ENCODE measurements at regions of chr16 and their contacts with region 1.

Region 1: GRCh38 chr16:22190776-22191531 is 15.1 kb upstream of the EEF2K start:
- DNase-seq: peak; percentile 98
- H3K4me3 ChIP-seq: peak overlapping the region; percentile 47
- H3K27me3 ChIP-seq: no peaks in the 10 kb centered on the region
- CTCF ChIP-seq: no peak

Region 2: GRCh38 chr16:21952040-21952792 is 238.7 kb before region 1 on chr16:
- CTCF ChIA-PET with region 1: interaction called, 21 read pairs
- POLR2A ChIA-PET with region 1: no interaction called
- DNase-seq: no peak
- H3K4me3 ChIP-seq: peak overlapping the region; percentile 87
- H3K27me3 ChIP-seq: no peaks in the 10 kb centered on the region
- CTCF ChIP-seq: no peak

Region 3: DNA sequence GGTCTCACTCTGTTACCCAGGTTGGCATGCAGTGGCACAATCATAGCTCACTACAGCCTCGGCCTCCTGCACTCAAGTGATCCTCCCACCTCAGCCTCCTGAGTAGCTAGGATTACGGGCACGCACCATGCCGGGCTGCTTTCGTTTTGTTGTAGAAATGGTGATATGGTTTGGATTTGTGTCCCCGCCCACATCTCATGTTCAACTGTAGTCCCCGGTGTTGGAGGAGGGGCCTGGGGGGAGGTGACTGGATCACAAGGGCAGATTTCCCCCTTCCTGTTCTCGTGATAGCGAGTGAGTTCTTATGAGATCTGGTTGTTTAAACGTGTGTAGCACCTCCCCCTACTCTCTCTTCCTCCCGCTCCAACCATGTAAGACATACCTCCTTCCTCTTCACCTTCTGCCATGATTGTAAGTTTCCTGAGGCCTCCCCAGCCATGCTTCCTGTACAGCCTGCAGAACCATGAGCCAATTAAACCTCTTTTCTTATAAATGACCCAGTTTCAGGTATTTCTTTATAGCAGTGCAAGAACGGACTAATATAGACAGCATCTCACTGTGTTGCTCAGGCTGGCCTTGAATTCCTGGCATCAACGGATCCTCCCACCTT is 196.0 kb before region 1 on chr16:
- CTCF ChIA-PET with region 1: interaction called, 26 read pairs
- POLR2A ChIA-PET with region 1: no interaction called
- DNase-seq: no peak
- H3K4me3 ChIP-seq: no peak overlapping the region
- H3K27me3 ChIP-seq: no peaks in the 10 kb centered on the region
- CTCF ChIP-seq: no peak

Region 4: GRCh38 chr16:22132766-22133165 is 58.2 kb before region 1 on chr16:
- CTCF ChIA-PET with region 1: no interaction called
- POLR2A ChIA-PET with region 1: no interaction called
- DNase-seq: no peak
- H3K4me3 ChIP-seq: no peak overlapping the region
- H3K27me3 ChIP-seq: peaks cover 2% of the 10 kb centered on the region
- CTCF ChIP-seq: no peak

Region 5: GRCh38 chr16:22174642-22175041 is 16.3 kb before region 1 on chr16:
- CTCF ChIA-PET with region 1: interaction called, 16 read pairs
- POLR2A ChIA-PET with region 1: no interaction called
- DNase-seq: no peak
- H3K4me3 ChIP-seq: no peak overlapping the region
- H3K27me3 ChIP-seq: 0 out of 2 replicates have a peak, but pooled peaks cover 1% of the 10 kb centered on the region
- CTCF ChIP-seq: no peak

Region 6: GRCh38 chr16:22217889-22218730 is 27.2 kb after region 1 on chr16:
- CTCF ChIA-PET with region 1: no interaction called
- POLR2A ChIA-PET with region 1: no interaction called
- DNase-seq: no peak
- H3K4me3 ChIP-seq: no peak overlapping the region
- H3K27me3 ChIP-seq: no peaks in the 10 kb centered on the region
- CTCF ChIP-seq: no peak

Region 7: DNA sequence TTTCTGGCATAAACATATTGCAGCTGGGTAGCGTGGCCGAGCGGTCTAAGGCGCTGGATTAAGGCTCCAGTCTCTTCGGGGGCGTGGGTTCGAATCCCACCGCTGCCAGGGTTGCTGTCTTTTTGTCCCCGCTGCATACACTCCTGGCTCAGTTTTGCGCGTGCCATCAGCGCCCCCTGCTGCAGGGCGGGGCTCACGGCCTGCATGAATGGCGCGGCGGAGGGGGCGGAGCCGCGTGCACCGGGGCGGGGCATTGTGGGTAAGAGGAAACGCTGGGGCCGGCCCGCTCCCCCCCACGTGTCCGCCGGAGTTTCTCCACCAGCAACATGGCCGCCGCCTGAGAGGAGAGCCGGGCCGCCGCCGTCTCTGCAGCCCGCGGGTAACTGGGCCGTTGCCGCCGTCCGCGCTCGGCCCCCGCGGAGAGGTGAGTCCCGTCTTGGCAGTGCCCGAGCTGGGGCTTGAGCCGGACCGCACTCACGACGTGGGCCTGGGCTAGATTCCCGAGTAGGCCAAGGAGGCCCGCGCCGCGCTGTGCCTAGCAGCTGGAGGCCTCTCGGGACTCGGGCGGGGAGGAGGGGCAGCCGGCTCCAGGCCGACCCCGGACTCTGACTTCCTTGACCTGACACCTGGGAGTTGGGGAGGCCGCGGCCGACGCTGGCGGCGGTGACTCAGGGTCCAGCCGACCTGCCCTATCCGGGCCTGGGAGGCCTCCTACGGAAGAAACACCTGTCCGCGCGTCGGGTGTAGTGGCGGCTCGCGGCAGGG is 106.3 kb after region 1 on chr16 and contains the start of gene POLR3E:
- CTCF ChIA-PET with region 1: interaction called, 21 read pairs
- POLR2A ChIA-PET with region 1: interaction called, 3 read pairs
- DNase-seq: peak; percentile 82
- H3K4me3 ChIP-seq: peak within 1 kb of the TSS; percentile 97
- H3K27me3 ChIP-seq: no peaks in the 10 kb centered on the region
- CTCF ChIP-seq: peak; percentile 89
- polyA plus RNA-seq, gene POLR3E: 36.6 and 60.9 TPM in 2 replicates

Measured in BJ (cell line).